CD4-positive, alpha-beta memory T cell (primary cell): ENCODE measurements at regions of chr4 and their contacts with region 1.

Region 1: GRCh38 chr4:21749924-21750323 is 198.6 kb downstream of the KCNIP4 start:
- DNase-seq: no peak
- H3K4me3 ChIP-seq: no peak overlapping the region
- H3K4me3 Mint-ChIP-seq: no peak overlapping the region
- H3K27ac ChIP-seq: no peak overlapping the region
- H3K27ac Mint-ChIP-seq: no peak overlapping the region
- H3K4me1 ChIP-seq: no peaks in the 10 kb centered on the region
- H3K4me1 Mint-ChIP-seq: no peaks in the 10 kb centered on the region
- H3K27me3 ChIP-seq: no peaks in the 10 kb centered on the region
- H3K27me3 Mint-ChIP-seq: no peaks in the 10 kb centered on the region

Region 2: GRCh38 chr4:20711335-20711734 is 1038.6 kb before region 1 on chr4:
- CTCF ChIA-PET with region 1: no interaction called
- POLR2A ChIA-PET with region 1: no interaction called
- intact Hi-C with region 1: no loop called
- DNase-seq: no peak
- H3K4me3 ChIP-seq: no peak overlapping the region
- H3K4me3 Mint-ChIP-seq: no peak overlapping the region
- H3K27ac ChIP-seq: no peak overlapping the region
- H3K27ac Mint-ChIP-seq: peak overlapping the region in 1 of 7 donors; percentile 32
- H3K4me1 ChIP-seq: no peaks in the 10 kb centered on the region
- H3K4me1 Mint-ChIP-seq: peaks cover 0 to 1% (median 0%) of the 10 kb centered on the region in 4 donors
- H3K27me3 ChIP-seq: no peaks in the 10 kb centered on the region
- H3K27me3 Mint-ChIP-seq: no peaks in the 10 kb centered on the region

Region 3: DNA sequence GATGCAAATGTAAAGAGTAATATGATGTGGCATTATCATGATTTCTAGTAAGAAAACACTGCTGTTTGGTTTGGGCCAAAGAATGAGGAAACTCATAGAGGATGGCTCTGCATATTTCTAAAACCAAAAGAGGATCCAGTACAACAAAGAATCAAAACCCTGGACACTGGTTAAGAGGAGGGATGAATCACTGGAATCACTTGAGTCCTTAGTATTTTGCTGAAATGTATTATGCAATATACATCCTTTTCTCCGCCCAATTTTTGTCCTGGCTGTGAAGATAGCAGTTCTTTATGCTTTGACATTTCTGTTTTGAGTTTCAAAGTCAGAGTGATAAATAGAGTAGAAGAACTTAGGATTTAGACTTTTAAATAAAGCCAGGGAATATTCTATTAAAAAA is 703.8 kb before region 1 on chr4:
- CTCF ChIA-PET with region 1: no interaction called
- POLR2A ChIA-PET with region 1: no interaction called
- intact Hi-C with region 1: loop called (anchors 10 kb)
- DNase-seq: no peak
- H3K4me3 ChIP-seq: no peak overlapping the region
- H3K4me3 Mint-ChIP-seq: no peak overlapping the region
- H3K27ac ChIP-seq: no peak overlapping the region
- H3K27ac Mint-ChIP-seq: no peak overlapping the region
- H3K4me1 ChIP-seq: no peaks in the 10 kb centered on the region
- H3K4me1 Mint-ChIP-seq: no peaks in the 10 kb centered on the region
- H3K27me3 ChIP-seq: no peaks in the 10 kb centered on the region
- H3K27me3 Mint-ChIP-seq: no peaks in the 10 kb centered on the region